ENCODE measurements at regions of chr16 and their contacts with region 1.

Region 1: GRCh38 chr16:85615852-85616606 is 2.9 kb downstream of the GSE1 start:
- DNase-seq: peak in 1 of 2 experiments; percentile 98
- H3K4me3 ChIP-seq: peak overlapping the region in 3 of 4 experiments; percentile 58 to 92 (median 67); a peak in 4 of 8 replicates
- H3K27ac ChIP-seq: no peak overlapping the region
- H3K4me1 ChIP-seq: peaks cover 4 to 37% (median 27%) of the 10 kb centered on the region in 4 experiments
- H3K27me3 ChIP-seq: no peaks in the 10 kb centered on the region
- CTCF ChIP-seq: peak in 2 of 3 experiments; percentile 92 to 97; a peak in 3 of 4 replicates
- EP300 ChIP-seq: no peak
- POLR2A ChIP-seq: no peak
- RAD21 ChIP-seq: peak; percentile 68 to 74

Region 2: DNA sequence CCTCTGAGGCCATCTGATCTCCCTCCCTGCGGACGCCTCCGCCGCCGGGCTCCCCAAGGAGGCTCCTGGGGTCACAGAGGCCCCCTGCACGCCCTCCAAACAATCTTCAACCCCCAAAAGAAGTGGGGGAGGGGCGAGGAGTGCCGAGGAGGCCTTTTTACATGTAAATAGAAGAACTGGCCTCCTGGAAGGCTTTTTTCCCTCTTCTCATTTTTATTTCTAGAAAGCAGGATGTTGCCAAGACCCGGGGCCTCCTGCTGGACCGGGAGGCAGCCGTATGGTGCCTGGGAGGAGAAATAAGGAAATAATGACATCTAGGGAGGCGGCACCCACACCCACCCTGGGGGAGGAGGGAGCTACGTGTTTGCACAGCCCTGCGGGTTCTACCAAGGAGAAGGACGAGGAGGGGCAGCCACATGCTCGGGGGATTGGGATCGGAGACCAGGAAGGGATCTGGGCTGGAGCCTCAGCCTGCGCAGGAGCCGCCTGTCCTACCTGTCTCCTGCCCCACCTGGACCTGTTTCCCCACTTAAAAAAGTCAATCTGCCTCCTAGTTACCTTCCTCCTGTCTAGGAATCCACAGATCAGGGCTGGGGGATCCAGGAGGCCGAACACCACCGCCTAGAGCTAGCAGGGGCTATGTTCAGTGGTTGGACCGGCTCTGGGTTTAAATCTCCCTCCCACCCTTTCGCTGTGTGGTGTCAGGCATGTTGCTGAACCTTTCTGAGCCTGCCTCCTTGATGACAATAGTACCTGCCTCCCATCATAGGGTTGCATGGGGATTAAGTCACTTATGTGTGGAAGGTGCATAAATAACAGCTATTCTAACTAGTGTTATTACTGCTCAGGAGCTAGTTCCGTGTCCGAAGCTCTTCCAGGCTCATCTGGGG is 178.6 kb before region 1 on chr16:
- CTCF ChIA-PET with region 1: interaction called, 13 read pairs
- POLR2A ChIA-PET with region 1: interaction called, 6 read pairs
- DNase-seq: no peak
- H3K4me3 ChIP-seq: peak overlapping the region in 1 of 4 experiments; percentile 50; a peak in 2 of 8 replicates
- H3K27ac ChIP-seq: peak overlapping the region; percentile 21; the same call in 1 of the 2 replicates
- H3K4me1 ChIP-seq: peaks cover 14 to 47% (median 35%) of the 10 kb centered on the region in 4 experiments
- H3K27me3 ChIP-seq: peaks cover 0 to 7% (median 0%) of the 10 kb centered on the region in 4 experiments; a peak in 3 of 7 replicates
- CTCF ChIP-seq: no peak
- EP300 ChIP-seq: no peak
- POLR2A ChIP-seq: no peak; a peak in 1 of 3 replicates
- RAD21 ChIP-seq: no peak

Region 3: GRCh38 chr16:85491058-85491771 is 124.8 kb before region 1 on chr16:
- CTCF ChIA-PET with region 1: interaction called, 42 read pairs
- POLR2A ChIA-PET with region 1: no interaction called
- DNase-seq: peak in 1 of 2 experiments; percentile 89
- H3K4me3 ChIP-seq: no peak overlapping the region
- H3K27ac ChIP-seq: no peak overlapping the region
- H3K4me1 ChIP-seq: peaks cover 3 to 19% (median 14%) of the 10 kb centered on the region in 4 experiments; a peak in 6 of 7 replicates
- H3K27me3 ChIP-seq: no peaks in the 10 kb centered on the region
- CTCF ChIP-seq: peak; percentile 89 to 96 (median 95)
- EP300 ChIP-seq: no peak
- POLR2A ChIP-seq: no peak
- RAD21 ChIP-seq: peak; percentile 66 to 76

Region 4: GRCh38 chr16:85554112-85554813 is 61.8 kb before region 1 on chr16:
- CTCF ChIA-PET with region 1: interaction called, 68 read pairs
- POLR2A ChIA-PET with region 1: interaction called, 29 read pairs
- DNase-seq: no peak
- H3K4me3 ChIP-seq: peak overlapping the region; percentile 54 to 98 (median 61)
- H3K27ac ChIP-seq: no peak overlapping the region
- H3K4me1 ChIP-seq: peaks cover 0 to 27% (median 21%) of the 10 kb centered on the region in 4 experiments; a peak in 6 of 7 replicates
- H3K27me3 ChIP-seq: no peaks in the 10 kb centered on the region; a peak in 2 of 7 replicates
- CTCF ChIP-seq: no peak
- EP300 ChIP-seq: no peak
- POLR2A ChIP-seq: no peak
- RAD21 ChIP-seq: no peak

Region 5: DNA sequence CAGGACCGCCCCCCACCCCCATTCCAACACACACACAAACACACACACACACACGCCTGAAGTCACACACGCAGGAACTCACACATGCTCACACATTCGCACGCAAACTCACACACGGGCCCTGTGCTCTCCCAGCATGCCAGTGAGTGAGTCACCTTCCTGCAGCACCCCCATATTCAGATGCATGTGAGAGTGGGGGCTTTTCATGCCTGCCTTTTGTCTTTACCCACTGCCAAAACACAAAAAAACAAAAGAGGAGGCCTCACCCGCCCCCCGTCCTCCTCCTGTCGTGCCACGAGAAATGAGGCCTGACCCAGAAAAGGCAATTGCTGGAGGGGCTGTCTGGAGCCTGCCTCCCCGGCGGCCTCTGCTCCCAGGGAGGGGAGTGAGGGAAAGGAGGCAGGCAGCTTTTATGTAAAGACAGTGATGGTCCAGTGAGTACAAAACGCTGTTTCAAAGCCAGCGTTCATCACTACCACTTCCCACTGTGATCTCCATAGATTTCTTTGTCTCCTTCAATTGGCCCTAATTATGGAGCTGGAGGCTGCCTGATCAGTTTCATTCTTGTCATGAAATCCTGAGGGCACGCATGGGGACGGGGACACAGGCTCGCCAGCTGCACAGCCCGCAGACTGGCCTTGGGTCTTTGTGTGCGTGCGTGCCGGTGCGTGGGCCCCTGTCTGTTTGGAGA is 32.4 kb before region 1 on chr16:
- CTCF ChIA-PET with region 1: interaction called, 65 read pairs
- POLR2A ChIA-PET with region 1: interaction called, 6 read pairs
- DNase-seq: peak in 1 of 2 experiments; percentile 51
- H3K4me3 ChIP-seq: peak overlapping the region in 2 of 4 experiments; percentile 14 to 31; a peak in 4 of 8 replicates
- H3K27ac ChIP-seq: no peak overlapping the region
- H3K4me1 ChIP-seq: peaks cover 32 to 84% (median 78%) of the 10 kb centered on the region in 4 experiments
- H3K27me3 ChIP-seq: peaks cover 0 to 32% (median 24%) of the 10 kb centered on the region in 4 experiments; a peak in 5 of 7 replicates
- CTCF ChIP-seq: no peak
- EP300 ChIP-seq: no peak
- POLR2A ChIP-seq: 0 out of 3 replicates have a peak, but pooled peaks of 1 of the 2 experiments have one; percentile 19
- RAD21 ChIP-seq: no peak

Region 6: DNA sequence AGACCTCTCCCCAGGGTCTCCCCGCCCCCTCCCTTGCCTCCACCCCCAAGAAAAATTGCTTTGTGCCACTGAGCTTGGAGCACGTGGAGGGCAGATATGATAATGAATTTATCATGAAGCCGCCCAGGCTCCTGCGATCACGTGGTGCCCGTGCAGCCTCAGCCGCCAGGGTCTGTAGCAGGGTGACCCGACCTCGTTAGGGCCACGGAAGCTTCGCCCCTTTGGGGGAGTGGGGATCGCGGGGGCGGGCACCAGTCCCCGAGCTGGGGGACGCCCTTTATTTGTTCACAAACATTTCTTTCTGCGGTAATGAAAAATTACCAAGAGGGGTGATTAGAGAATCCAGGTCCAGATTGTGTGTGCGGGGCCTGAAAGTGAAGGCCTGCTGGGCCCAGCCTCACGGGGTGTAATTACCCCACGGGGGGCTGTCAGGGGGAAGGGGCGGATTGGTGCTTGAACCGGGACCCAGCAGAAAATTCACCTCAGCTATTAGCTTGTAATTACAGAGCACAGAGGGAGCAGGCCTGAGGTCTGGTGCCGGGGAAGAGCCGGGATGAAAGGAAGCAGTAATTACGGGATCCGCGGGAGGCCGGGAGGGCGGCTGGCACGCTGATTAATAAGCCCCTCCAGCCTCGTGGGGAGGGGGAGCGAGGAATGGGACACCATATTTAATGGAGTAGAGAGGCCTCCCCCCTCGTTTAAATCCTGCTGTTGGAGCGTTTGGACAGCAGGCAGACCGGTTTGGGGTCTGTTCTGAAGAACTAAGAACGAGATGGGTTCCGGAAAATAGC is 10.4 kb after region 1 on chr16:
- CTCF ChIA-PET with region 1: interaction called, 93 read pairs
- POLR2A ChIA-PET with region 1: interaction called, 19 read pairs
- DNase-seq: peak in 1 of 2 experiments; percentile 71
- H3K4me3 ChIP-seq: peak overlapping the region in 3 of 4 experiments; percentile 20 to 50 (median 21); a peak in 5 of 8 replicates
- H3K27ac ChIP-seq: no peak overlapping the region; the same call in 1 of the 2 replicates
- H3K4me1 ChIP-seq: peaks cover 0 to 21% (median 12%) of the 10 kb centered on the region in 4 experiments; a peak in 6 of 7 replicates
- H3K27me3 ChIP-seq: no peaks in the 10 kb centered on the region; a peak in 1 of 7 replicates
- CTCF ChIP-seq: no peak
- EP300 ChIP-seq: no peak
- POLR2A ChIP-seq: no peak
- RAD21 ChIP-seq: no peak

Region 7: DNA sequence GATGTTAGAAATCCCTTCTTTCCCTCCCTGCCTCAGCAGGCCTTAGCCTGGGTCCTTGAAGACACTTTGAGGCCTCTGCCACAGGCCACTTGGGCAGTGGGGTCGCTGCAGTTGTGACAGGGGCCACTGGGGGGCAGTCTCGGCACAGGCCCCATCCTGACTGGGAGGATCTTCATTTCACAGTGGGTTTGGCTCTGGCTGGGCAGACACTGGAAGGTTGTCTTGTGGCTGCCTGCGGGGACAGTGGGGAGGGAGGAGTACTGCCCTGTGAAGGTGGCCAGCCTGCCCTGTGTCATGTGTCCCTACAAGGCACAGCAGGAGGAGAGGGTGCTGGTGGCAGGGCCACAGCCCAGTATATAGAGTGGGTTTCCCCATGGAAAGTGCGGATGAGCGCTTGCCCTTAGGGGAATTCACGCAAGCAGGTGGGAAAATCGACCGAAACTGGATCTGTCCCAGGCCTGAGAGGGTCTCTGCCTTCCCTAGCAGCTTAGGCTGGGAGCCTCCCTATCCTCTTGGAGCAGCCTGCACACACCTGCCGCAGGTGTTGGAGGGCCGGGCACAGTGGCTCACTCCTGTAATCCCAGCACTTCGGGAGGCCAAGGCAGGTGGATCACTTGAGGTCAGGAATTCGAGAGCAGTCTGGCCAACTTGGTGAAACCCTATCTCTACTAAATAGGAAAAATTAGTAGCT is 43.9 kb after region 1 on chr16:
- CTCF ChIA-PET with region 1: interaction called, 17 read pairs
- POLR2A ChIA-PET with region 1: no interaction called
- DNase-seq: peak; percentile 57 to 98
- H3K4me3 ChIP-seq: no peak overlapping the region
- H3K27ac ChIP-seq: no peak overlapping the region
- H3K4me1 ChIP-seq: no peaks in the 10 kb centered on the region; a peak in 1 of 7 replicates
- H3K27me3 ChIP-seq: no peaks in the 10 kb centered on the region
- CTCF ChIP-seq: peak; percentile 91 to 98 (median 97)
- EP300 ChIP-seq: no peak
- POLR2A ChIP-seq: no peak
- RAD21 ChIP-seq: peak; percentile 68 to 82

Measured in H1 (cell line).